MCF 10A (cell line): ENCODE measurements at regions of chr10 and their contacts with region 1.

Region 1: GRCh38 chr10:22714479-22715289 is at the start of gene PIP4K2A:
- DNase-seq: peak; percentile 72
- H3K4me3 Mint-ChIP-seq: peak within 1 kb of the TSS; percentile 78
- H3K27ac Mint-ChIP-seq: peak within 1 kb of the TSS; percentile 31
- H3K4me1 Mint-ChIP-seq: peaks cover 12% of the 10 kb centered on the region
- H3K27me3 Mint-ChIP-seq: no peaks in the 10 kb centered on the region
- CTCF ChIP-seq: no peak
- total RNA-seq, gene PIP4K2A: 24.2 and 27.5 TPM in 2 replicates

Region 2: DNA sequence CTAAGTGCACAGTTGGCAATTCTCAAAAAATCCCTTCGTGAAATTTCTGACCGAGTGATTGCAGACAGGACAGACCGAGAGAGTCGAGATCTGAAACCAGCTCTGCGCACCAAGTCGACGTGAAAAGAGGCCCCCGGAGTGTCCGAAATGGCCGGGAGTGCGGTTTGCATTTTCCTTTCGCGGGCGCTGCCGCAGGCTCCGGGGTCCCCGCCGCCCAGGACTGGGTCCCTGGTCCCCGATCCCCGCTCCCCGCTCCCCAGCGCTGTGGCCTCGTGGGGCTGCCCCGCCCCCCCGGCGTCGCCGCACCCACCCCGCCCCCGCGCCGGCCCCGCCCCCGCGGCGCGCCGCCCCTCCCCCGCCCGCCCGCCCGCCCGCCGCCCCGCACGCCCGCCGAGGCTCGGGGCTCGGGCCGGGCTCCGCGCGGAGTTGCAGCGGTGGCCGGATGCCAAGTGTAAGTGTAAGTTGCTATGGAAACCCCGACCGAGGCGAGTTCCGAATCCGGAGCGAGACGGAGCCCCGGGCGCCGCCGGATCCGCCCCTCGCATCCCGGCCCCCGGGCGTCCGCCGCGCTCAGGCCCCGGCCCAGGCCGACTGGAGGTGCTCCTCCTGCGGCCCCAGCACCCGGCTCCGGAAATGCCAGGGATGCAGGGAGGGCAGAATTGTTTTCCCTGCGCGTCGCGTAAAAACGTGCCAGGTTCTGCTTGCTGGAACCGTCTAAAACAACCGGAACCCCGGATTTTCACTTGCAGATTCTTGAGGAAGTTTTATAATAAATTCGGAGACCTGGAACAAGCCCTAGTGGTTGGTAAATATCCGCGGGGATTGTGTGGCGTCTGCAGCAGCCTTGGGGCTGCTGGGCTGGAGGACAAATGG is 389.2 kb before region 1 on chr10:
- CTCF ChIA-PET with region 1: interaction called, 4 read pairs
- POLR2A ChIA-PET with region 1: no interaction called
- intact Hi-C with region 1: loop called (anchors 10 kb)
- DNase-seq: peak; percentile 64
- H3K4me3 Mint-ChIP-seq: peak overlapping the region; percentile 80
- H3K27ac Mint-ChIP-seq: peak overlapping the region; percentile 31
- H3K4me1 Mint-ChIP-seq: peaks cover 29% of the 10 kb centered on the region
- H3K27me3 Mint-ChIP-seq: peaks cover 11% of the 10 kb centered on the region
- CTCF ChIP-seq: no peak

Region 3: DNA sequence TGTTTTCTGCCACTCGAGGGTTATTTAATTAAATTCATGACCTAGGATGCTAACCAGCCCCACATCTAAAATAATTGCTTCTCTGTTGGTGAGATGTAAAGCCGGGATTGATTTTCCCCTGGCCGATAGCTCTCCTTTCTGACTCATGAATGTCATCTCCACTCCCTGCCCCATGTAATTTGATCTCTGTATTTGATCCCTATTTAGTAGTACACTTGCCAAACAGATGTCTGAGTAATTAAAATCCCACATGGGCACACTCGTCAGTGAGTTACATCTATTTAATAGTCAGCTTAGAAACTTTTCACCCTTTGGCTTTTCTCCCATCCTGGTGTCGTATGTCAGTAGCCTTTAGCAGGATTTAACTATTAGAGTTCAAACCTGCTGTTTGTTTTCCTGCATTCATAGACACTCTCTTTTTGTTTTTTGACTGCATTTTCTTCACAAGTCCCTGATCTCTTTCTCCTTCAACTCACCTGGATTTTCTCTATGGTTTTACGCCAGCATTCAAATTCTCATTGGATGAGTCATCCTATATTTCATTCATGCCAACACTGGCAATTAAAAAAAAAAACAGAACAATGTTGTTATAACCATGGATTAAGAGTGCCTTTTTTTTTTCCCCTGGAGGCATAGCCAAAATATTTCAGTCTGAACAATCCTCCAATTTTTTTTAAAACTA is 286.7 kb before region 1 on chr10:
- CTCF ChIA-PET with region 1: no interaction called
- POLR2A ChIA-PET with region 1: no interaction called
- intact Hi-C with region 1: loop called (anchors 5 kb)
- DNase-seq: peak; percentile 93
- H3K4me3 Mint-ChIP-seq: peak overlapping the region; percentile 49
- H3K27ac Mint-ChIP-seq: peak overlapping the region; percentile 63
- H3K4me1 Mint-ChIP-seq: peaks cover 41% of the 10 kb centered on the region
- H3K27me3 Mint-ChIP-seq: no peaks in the 10 kb centered on the region
- CTCF ChIP-seq: no peak

Region 4: DNA sequence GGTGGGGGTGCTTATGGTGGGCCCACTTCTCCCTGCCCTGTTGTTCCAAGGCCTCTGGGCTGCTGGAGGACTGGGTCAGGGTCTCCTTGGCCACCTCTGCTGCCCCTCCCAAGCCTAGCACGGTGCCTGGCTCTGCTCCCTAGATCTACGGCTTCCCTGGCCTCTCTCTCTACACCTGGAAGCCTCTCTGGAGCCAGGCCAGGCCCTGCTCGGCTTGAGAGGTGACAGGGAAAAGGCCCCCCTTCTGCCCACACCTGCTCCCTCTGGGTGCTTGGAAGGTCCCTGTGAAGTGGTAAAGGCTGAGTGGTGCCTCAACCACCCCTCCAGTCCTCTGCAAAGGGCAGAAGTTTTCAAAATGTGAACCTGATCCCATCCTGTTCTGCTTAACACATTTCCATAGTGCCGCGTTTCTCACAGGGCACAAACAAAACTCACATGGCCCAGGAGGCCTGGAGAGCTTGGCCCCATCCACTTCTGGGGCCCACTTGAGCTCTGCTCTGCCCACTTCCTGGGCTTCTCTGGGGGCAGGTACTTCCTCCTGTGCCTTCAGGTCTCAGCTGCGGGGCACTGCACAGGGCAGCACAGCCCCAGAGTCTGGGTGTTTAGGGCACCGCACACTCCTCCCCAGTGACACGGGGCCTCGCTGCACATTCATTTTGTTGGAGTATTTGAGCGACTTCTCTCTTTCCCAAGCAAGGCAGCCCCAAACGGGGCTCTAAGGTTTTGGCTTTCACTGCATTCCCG is 170.2 kb before region 1 on chr10:
- CTCF ChIA-PET with region 1: no interaction called
- POLR2A ChIA-PET with region 1: no interaction called
- intact Hi-C with region 1: no loop called
- DNase-seq: no peak
- H3K4me3 Mint-ChIP-seq: no peak overlapping the region
- H3K27ac Mint-ChIP-seq: peak overlapping the region; percentile 23
- H3K4me1 Mint-ChIP-seq: no peaks in the 10 kb centered on the region
- H3K27me3 Mint-ChIP-seq: no peaks in the 10 kb centered on the region
- CTCF ChIP-seq: no peak

Region 5: DNA sequence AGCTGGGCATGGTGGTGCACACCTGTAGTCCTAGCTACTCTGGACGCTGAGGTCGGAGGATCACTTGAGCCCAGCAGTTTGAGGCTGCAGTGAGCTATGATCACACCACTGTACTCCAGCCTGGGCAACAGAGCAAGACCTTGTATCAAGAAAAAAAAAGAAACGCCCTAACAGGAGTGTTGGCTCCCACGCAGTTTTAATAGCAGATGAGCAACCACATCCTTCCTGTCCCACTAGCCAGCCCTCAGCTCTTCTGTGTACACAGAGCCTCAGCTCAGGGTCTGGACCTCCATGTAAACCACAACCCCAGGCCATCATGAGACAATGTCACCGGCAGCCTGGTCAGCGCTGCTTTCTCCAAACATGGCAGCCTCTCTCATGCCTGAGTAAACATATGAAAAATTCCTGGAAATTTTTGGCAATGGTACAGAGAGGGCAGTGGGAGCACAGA is 108.5 kb before region 1 on chr10:
- CTCF ChIA-PET with region 1: interaction called, 4 read pairs
- POLR2A ChIA-PET with region 1: interaction called, 4 read pairs
- intact Hi-C with region 1: loop called (anchors 5 kb)
- DNase-seq: peak; percentile 29
- H3K4me3 Mint-ChIP-seq: no peak overlapping the region
- H3K27ac Mint-ChIP-seq: no peak overlapping the region
- H3K4me1 Mint-ChIP-seq: peaks cover 6% of the 10 kb centered on the region
- H3K27me3 Mint-ChIP-seq: no peaks in the 10 kb centered on the region
- CTCF ChIP-seq: no peak

Region 6: DNA sequence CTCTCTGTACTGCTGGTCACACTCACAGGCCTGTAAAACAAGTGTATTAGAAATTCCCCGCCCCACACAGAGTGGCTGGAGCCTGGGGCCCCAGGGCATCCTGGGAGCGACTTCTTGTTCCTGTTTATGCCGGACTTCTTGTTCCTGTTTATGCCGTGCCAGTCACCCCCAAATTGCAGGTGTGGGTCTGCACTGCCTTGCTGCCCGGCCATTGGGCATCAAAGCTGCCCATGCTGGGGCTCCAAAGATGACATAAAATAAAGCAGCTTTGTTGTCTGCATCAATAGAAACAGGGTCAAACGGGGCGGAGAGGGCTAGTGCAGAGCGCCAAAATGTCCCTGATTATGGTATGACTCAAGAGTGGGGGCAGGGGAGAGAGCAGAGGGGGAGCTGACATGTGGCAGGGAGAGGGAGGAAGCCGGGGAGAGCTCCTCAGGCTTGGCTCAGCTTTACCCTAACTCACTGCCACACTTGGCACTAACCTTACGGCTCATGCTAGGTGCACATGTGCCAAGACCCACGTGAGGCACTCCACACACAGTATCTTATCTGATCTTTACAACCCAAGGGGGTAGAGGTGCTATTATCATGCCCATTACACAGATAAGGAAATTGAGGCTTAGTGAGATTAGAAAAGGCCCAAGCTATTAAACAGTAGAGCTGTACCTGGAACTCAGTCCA is 98.7 kb before region 1 on chr10:
- CTCF ChIA-PET with region 1: no interaction called
- POLR2A ChIA-PET with region 1: interaction called, 7 read pairs
- intact Hi-C with region 1: loop called (anchors 1 kb)
- DNase-seq: peak; percentile 82
- H3K4me3 Mint-ChIP-seq: peak overlapping the region; percentile 79
- H3K27ac Mint-ChIP-seq: peak overlapping the region; percentile 88
- H3K4me1 Mint-ChIP-seq: peaks cover 39% of the 10 kb centered on the region
- H3K27me3 Mint-ChIP-seq: no peaks in the 10 kb centered on the region
- CTCF ChIP-seq: no peak

Region 7: DNA sequence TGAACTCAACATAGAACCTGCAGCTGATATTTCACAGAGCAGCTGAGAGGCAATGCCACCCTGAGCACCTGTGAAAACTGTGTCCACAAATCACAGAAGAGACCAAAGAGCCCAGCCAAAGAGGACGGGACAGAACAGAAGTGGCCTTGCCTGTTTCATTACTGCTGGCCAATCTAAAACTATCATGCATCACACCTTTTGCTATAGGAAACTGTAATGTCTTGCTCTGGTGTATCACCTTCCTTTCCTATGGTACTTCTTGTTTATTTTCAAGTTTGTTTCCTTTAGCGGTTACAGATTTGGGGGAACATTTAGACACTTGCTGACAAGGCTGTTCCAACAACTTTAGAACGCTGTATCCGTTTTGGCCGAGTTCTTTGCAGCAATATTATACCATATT is 80.6 kb before region 1 on chr10:
- CTCF ChIA-PET with region 1: no interaction called
- POLR2A ChIA-PET with region 1: no interaction called
- intact Hi-C with region 1: no loop called
- DNase-seq: no peak
- H3K4me3 Mint-ChIP-seq: no peak overlapping the region
- H3K27ac Mint-ChIP-seq: no peak overlapping the region
- H3K4me1 Mint-ChIP-seq: peaks cover 17% of the 10 kb centered on the region
- H3K27me3 Mint-ChIP-seq: no peaks in the 10 kb centered on the region
- CTCF ChIP-seq: no peak

Region 8: GRCh38 chr10:22682237-22683139 is 32.2 kb before region 1 on chr10:
- CTCF ChIA-PET with region 1: interaction called, 4 read pairs
- POLR2A ChIA-PET with region 1: interaction called, 19 read pairs
- intact Hi-C with region 1: no loop called
- DNase-seq: peak; percentile 61
- H3K4me3 Mint-ChIP-seq: peak overlapping the region; percentile 38
- H3K27ac Mint-ChIP-seq: peak overlapping the region; percentile 88
- H3K4me1 Mint-ChIP-seq: peaks cover 33% of the 10 kb centered on the region
- H3K27me3 Mint-ChIP-seq: no peaks in the 10 kb centered on the region
- CTCF ChIP-seq: no peak